K562 (cell line): ENCODE measurements at regions of chr6 and their contacts with region 1.

Region 1: DNA sequence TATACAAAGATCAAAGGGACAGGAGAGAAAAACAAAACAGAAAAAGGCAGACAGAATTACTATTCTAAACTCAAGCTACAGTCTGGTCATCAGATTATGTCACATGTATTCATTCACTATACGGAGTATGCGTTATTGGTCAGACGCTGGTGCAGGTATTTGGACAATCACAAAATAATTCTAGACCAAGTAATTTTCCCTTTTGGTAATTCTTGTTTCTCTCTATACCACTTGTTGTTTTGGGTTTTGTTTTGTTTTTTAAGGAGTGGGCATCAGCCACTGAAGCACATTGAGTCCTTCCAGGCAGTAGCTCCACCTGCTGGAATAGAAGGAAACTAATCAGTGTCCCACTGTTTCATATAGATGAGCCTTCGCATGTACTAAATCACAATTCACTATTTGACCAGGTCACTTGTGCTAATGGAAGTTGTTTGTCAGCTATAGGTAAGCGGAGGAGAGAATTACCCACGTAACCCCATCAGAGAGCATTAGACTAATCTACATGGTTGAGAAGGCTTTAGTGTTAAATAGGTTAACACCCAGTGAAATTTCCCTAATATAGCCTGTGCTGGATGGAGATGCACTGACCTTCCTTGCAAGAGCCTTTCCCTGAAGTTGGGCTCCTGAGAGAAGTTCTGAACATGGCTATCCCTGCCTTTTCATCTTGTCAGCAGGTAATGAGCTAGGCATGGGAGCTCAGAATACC is 77.9 kb downstream of the TNFAIP3 start:
- DNase-seq: peak; percentile 52 to 67 (median 56)
- ATAC-seq: peak; percentile 92
- H3K4me3 ChIP-seq: no peak overlapping the region
- H3K27ac ChIP-seq: no peak overlapping the region
- H3K4me1 ChIP-seq: peaks cover 0 to 7% of the 10 kb centered on the region in 2 experiments; a peak in 2 of 5 replicates
- H3K27me3 ChIP-seq: no peaks in the 10 kb centered on the region
- CTCF ChIP-seq: peak; percentile 82 to 92 (median 84)
- EP300 ChIP-seq: no peak
- POLR2A ChIP-seq: no peak
- RAD21 ChIP-seq: peak; percentile 93 to 96

Region 2: DNA sequence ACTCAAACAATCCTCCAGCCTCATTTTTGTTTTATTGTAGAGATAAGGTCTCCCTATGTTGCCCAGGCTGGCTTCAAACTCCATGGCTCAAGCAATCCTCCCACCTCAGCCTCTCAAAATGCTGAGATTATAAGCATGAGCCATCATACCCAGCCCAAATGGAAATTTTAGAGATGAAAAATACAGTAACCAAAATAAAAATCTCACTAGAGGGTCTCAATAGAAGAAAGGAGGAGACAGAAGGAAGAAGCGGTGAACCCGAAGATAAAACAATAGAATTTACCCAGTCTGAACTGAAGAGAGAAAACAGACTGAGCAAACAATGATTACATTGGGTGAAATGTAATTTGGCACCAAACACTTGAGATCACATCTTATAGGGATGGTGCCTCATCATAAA is 434.0 kb before region 1 on chr6:
- CTCF ChIA-PET with region 1: no interaction called
- POLR2A ChIA-PET with region 1: no interaction called
- in situ Hi-C with region 1: no loop called
- intact Hi-C with region 1: no loop called
- DNase-seq: no peak
- ATAC-seq: no peak
- H3K4me3 ChIP-seq: no peak overlapping the region
- H3K27ac ChIP-seq: no peak overlapping the region
- H3K4me1 ChIP-seq: no peaks in the 10 kb centered on the region
- H3K27me3 ChIP-seq: peaks cover 0 to 8% of the 10 kb centered on the region in 2 experiments; a peak in 2 of 5 replicates
- CTCF ChIP-seq: no peak
- EP300 ChIP-seq: no peak
- POLR2A ChIP-seq: no peak
- RAD21 ChIP-seq: no peak

Region 3: DNA sequence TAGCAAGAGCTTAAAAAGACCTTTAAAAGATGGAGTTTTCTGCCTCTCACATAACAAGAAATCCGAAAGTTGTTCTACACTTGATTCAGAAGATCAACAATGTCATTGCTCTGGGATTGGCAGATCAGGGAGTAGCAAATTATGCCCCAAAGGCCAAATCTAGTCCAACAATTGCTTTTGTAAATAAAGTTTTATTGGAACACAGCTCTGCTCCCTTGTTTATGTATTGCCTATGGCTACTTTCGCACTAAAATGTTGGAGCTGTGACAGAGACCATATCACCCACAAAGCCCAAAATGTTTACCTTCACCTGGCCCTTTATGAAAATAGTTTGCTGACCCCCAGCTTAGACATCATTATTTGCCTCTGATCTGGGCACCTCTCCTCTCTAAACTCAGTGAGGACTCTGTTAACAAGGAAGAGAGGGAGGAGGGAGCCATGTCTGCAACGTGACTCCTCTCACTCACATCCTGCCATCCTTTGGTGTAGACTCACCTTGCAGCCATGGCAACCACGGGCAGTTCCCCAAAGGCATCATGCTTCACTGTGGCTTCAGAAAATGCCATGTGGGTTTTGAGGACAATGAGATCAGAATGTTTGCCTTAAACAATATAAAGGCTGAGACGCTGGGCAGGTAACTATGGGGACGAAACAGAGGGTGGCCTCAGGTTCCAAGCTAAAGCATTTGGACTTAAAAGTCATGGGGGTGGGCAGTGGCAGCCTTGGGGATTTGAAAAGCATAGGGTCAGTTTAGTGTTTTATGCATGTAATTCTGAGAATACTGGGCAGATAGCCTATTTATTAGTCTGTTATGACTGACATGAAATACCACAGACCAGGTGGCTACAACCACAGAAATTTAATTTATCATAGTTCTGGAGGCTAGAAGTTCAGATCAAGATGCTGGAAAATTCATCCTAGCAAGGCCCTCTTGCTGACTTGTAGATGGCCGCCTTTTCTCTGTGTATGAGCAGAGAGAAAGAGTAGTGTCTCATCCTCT is 227.6 kb before region 1 on chr6:
- CTCF ChIA-PET with region 1: no interaction called
- POLR2A ChIA-PET with region 1: interaction called, 3 read pairs
- in situ Hi-C with region 1: loop called (anchors 10 kb)
- intact Hi-C with region 1: no loop called
- DNase-seq: no peak
- ATAC-seq: no peak
- H3K4me3 ChIP-seq: no peak overlapping the region
- H3K27ac ChIP-seq: no peak overlapping the region
- H3K4me1 ChIP-seq: no peaks in the 10 kb centered on the region
- H3K27me3 ChIP-seq: no peaks in the 10 kb centered on the region
- CTCF ChIP-seq: no peak
- EP300 ChIP-seq: no peak
- POLR2A ChIP-seq: no peak
- RAD21 ChIP-seq: no peak

Region 4: GRCh38 chr6:137799950-137800568 is 144.9 kb before region 1 on chr6:
- CTCF ChIA-PET with region 1: interaction called, 12 read pairs
- POLR2A ChIA-PET with region 1: interaction called, 3 read pairs
- in situ Hi-C with region 1: loop called (anchors 10 kb)
- intact Hi-C with region 1: loop called (anchors 1 kb)
- DNase-seq: peak; percentile 51 to 88 (median 60)
- ATAC-seq: peak; percentile 92
- H3K4me3 ChIP-seq: no peak overlapping the region
- H3K27ac ChIP-seq: no peak overlapping the region
- H3K4me1 ChIP-seq: peaks cover 0 to 6% of the 10 kb centered on the region in 2 experiments; a peak in 4 of 5 replicates
- H3K27me3 ChIP-seq: no peaks in the 10 kb centered on the region
- CTCF ChIP-seq: peak; percentile 79 to 93 (median 85)
- EP300 ChIP-seq: 0 out of 2 replicates have a peak, but pooled peaks have one; percentile 18
- POLR2A ChIP-seq: no peak
- RAD21 ChIP-seq: peak; percentile 97 to 98

Region 5: GRCh38 chr6:137919837-137920730 is 24.9 kb before region 1 on chr6:
- CTCF ChIA-PET with region 1: no interaction called
- POLR2A ChIA-PET with region 1: interaction called, 3 read pairs
- in situ Hi-C with region 1: no loop called
- intact Hi-C with region 1: loop called (anchors 2 kb)
- DNase-seq: peak; percentile 67 to 80 (median 72)
- ATAC-seq: peak; percentile 75
- H3K4me3 ChIP-seq: no peak overlapping the region
- H3K27ac ChIP-seq: peak overlapping the region; percentile 68
- H3K4me1 ChIP-seq: peaks cover 6 to 50% of the 10 kb centered on the region in 2 experiments; a peak in 4 of 5 replicates
- H3K27me3 ChIP-seq: no peaks in the 10 kb centered on the region
- CTCF ChIP-seq: no peak
- EP300 ChIP-seq: peak; percentile 95
- POLR2A ChIP-seq: no peak
- RAD21 ChIP-seq: peak in 1 of 2 experiments; percentile 10; a peak in 1 of 4 replicates

Region 6: DNA sequence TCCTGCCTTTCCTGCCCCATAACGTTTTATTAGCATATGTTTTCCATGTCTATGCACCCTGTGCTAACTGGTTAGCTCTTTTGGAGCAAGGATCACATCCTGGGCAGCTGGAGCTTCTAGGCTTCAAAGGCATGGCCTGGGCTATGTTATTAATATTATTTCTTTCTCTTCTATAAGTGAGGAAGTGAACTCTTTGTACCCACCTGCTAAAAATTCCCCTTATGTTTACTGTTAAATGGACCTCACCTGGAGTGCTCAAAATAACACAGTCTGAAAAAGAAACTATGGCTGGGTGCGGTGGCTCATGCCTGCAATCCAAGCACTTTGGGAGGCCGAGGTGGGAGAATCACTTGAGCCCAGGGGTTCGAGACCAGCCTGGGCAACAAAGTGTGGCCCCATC is 19.9 kb after region 1 on chr6:
- CTCF ChIA-PET with region 1: no interaction called
- POLR2A ChIA-PET with region 1: no interaction called
- in situ Hi-C with region 1: no loop called
- intact Hi-C with region 1: no loop called
- DNase-seq: no peak
- ATAC-seq: no peak
- H3K4me3 ChIP-seq: no peak overlapping the region
- H3K27ac ChIP-seq: no peak overlapping the region
- H3K4me1 ChIP-seq: peaks cover 3 to 19% of the 10 kb centered on the region in 2 experiments; a peak in 3 of 5 replicates
- H3K27me3 ChIP-seq: no peaks in the 10 kb centered on the region
- CTCF ChIP-seq: no peak
- EP300 ChIP-seq: no peak
- POLR2A ChIP-seq: no peak
- RAD21 ChIP-seq: no peak

Region 7: DNA sequence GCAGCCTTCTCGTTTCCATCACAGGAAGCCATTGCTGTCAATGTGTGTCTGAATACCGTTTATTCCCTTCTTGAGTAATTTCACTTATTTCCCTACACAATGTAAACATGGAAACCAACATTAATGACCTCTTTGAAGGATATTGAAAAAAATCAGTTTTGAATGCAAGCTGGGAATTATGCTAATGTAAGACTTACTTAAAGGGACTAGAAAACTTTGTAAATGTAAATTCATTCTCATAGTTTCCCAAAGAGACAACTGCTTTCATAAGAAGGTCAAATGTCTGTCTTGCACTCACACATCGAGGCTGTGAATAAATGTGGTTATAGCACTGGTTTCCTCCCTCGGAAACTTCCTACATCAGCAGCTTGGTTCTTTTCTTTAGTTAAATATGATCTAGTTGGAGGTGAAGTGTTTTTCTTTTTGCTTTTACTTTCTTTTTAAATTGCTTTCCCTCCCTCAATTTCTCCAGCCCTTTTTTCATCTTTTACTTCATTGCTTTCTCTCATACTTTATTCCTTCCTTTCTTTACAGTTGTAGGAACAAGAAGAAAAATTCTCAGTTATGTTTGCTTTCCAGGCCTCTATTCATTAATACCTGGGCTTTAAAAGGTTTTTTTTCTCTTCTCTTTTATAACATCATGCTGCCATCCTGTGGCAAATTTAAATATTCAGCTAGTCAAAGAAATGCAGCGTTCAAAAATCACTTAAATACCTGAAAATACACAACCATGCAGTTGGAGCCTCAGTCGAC is 30.4 kb after region 1 on chr6:
- CTCF ChIA-PET with region 1: no interaction called
- POLR2A ChIA-PET with region 1: no interaction called
- in situ Hi-C with region 1: no loop called
- intact Hi-C with region 1: no loop called
- DNase-seq: no peak
- ATAC-seq: peak; percentile 49; the same call in 2 of the 3 replicates
- H3K4me3 ChIP-seq: no peak overlapping the region
- H3K27ac ChIP-seq: no peak overlapping the region
- H3K4me1 ChIP-seq: peaks cover 5 to 15% of the 10 kb centered on the region in 2 experiments; a peak in 3 of 5 replicates
- H3K27me3 ChIP-seq: no peaks in the 10 kb centered on the region
- CTCF ChIP-seq: peak; percentile 29 to 70 (median 46); a peak in 3 of 6 replicates
- EP300 ChIP-seq: no peak
- POLR2A ChIP-seq: no peak
- RAD21 ChIP-seq: peak; percentile 83 to 89